Naive thymus-derived CD4-positive, alpha-beta T cell (primary cell): ENCODE measurements at regions of chr1 and their contacts with region 1.

Region 1: DNA sequence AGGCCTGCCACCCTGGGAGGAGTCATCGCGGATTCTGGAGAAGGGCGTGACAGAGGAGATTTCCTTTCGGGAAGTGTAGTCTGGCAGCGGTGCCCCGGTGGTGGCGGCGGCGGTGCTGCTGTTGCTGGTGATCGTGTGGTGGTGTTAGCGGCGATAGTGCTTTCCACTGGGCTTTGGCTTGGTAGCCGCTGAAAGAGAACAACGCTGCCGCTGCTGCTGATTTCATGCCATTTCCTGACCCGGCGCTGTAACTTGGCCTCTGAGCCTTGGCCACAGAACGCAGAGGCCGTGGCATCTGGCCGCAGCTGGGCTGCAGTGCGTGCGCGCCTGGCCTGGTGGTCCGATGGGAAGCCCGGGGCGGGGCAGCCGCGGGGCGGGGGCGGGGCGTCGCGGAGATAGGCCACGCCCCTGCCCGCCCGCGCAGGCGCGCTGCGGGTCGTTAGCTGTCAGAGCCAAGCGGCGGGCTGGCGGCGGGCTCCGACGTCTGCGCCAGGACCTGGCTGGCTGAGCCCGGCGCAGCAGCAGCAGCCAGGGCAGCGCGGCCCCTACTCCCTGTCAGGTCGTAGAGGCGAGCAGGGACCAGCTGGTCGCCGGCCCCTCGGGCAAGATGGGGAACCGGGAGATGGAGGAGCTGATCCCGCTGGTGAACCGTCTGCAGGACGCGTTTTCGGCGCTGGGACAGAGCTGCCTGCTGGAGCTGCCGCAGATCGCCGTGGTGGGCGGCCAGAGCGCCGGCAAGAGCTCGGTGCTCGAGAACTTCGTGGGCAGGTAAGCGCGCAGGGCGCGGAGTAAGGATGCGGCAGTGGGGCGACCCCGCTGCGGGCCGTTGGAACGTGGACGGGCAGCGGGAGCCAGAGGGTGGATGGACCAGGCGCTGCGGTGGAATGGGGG is at the start of gene DNM3:
- DNase-seq: peak; percentile 71 to 90 (median 86)
- ATAC-seq: peak; percentile 97
- H3K4me3 ChIP-seq: peak within 1 kb of the TSS; percentile 80
- H3K4me3 Mint-ChIP-seq: peak within 1 kb of the TSS; percentile 85 to 93 (median 90)
- H3K27ac ChIP-seq: peak within 1 kb of the TSS; percentile 64
- H3K27ac Mint-ChIP-seq: peak within 1 kb of the TSS; percentile 76 to 95 (median 83)
- H3K4me1 ChIP-seq: peaks cover 0 to 6% of the 10 kb centered on the region in 2 donors
- H3K4me1 Mint-ChIP-seq: peaks cover 15 to 19% (median 18%) of the 10 kb centered on the region in 7 donors
- H3K27me3 ChIP-seq: peaks cover 3 to 16% of the 10 kb centered on the region in 2 donors
- H3K27me3 Mint-ChIP-seq: peaks cover 12 to 44% (median 16%) of the 10 kb centered on the region in 5 donors
- total RNA-seq, gene DNM3: 1.9 to 2.5 (median 2.1) TPM

Region 2: GRCh38 chr1:170531758-170532657 is 1309.3 kb before region 1 on chr1 and contains the start of gene GORAB:
- CTCF ChIA-PET with region 1: no interaction called
- POLR2A ChIA-PET with region 1: no interaction called
- intact Hi-C with region 1: loop called in 1 of 2 experiments (anchors 5 kb)
- DNase-seq: peak; percentile 74 to 87 (median 83)
- ATAC-seq: peak; percentile 97
- H3K4me3 ChIP-seq: peak within 1 kb of the TSS; percentile 95
- H3K4me3 Mint-ChIP-seq: no peak within 1 kb of the TSS
- H3K27ac ChIP-seq: peak within 1 kb of the TSS; percentile 91
- H3K27ac Mint-ChIP-seq: peak within 1 kb of the TSS in 1 of 9 donors; percentile 36
- H3K4me1 ChIP-seq: peaks cover 8 to 14% of the 10 kb centered on the region in 2 donors
- H3K4me1 Mint-ChIP-seq: peaks cover 7 to 29% (median 19%) of the 10 kb centered on the region in 7 donors
- H3K27me3 ChIP-seq: no peaks in the 10 kb centered on the region
- H3K27me3 Mint-ChIP-seq: peaks cover 0 to 20% (median 0%) of the 10 kb centered on the region in 5 donors
- total RNA-seq, gene GORAB: 10.9 to 25.3 (median 22.7) TPM

Region 3: GRCh38 chr1:171292799-171293198 is 548.5 kb before region 1 on chr1:
- CTCF ChIA-PET with region 1: no interaction called
- POLR2A ChIA-PET with region 1: no interaction called
- intact Hi-C with region 1: no loop called
- DNase-seq: no peak
- ATAC-seq: no peak
- H3K4me3 ChIP-seq: no peak overlapping the region
- H3K4me3 Mint-ChIP-seq: no peak overlapping the region
- H3K27ac ChIP-seq: no peak overlapping the region
- H3K27ac Mint-ChIP-seq: no peak overlapping the region
- H3K4me1 ChIP-seq: no peaks in the 10 kb centered on the region
- H3K4me1 Mint-ChIP-seq: no peaks in the 10 kb centered on the region
- H3K27me3 ChIP-seq: no peaks in the 10 kb centered on the region
- H3K27me3 Mint-ChIP-seq: peaks cover 0 to 43% (median 19%) of the 10 kb centered on the region in 5 donors

Region 4: DNA sequence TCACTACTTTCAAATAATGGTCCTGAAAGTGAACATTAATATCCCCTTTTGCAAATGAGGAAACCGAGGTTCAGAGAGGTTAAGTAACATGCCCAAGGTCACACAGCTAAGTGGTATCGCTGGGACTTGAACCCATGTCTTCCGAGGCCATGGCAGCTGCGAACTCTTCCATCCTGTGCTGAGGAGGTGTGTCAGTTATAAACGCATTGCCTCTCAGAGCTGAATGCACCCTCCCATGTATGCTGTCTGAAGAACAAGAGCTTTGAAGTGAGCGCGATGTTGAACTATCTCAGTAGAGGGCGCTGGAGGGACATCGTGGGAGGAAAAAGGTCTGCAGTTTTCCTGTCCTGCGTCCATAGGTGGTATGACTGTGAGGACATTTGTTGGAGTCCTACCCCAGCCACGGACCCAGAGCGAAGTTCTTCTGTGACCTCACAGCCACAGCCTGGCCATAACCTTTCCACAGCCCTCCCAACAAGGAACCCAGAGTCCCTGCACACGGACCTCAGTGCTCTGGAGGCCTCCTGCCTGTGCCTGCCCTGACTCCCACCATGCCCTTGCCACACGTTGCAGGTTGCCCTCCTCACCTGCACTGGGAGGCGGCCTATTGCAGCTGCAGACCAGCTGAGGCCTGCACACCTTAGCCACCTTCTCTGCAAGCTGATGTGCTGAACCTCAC is 196.4 kb before region 1 on chr1:
- CTCF ChIA-PET with region 1: no interaction called
- POLR2A ChIA-PET with region 1: no interaction called
- intact Hi-C with region 1: loop called in 1 of 2 experiments (anchors 5 kb)
- DNase-seq: peak; percentile 19 to 73 (median 62)
- ATAC-seq: peak; percentile 90
- H3K4me3 ChIP-seq: no peak overlapping the region
- H3K4me3 Mint-ChIP-seq: peak overlapping the region in 4 of 10 donors; percentile 2 to 27 (median 14)
- H3K27ac ChIP-seq: no peak overlapping the region
- H3K27ac Mint-ChIP-seq: peak overlapping the region in 3 of 9 donors; percentile 42 to 82 (median 77)
- H3K4me1 ChIP-seq: peaks cover 0 to 4% of the 10 kb centered on the region in 2 donors
- H3K4me1 Mint-ChIP-seq: peaks cover 4 to 12% (median 6%) of the 10 kb centered on the region in 7 donors
- H3K27me3 ChIP-seq: no peaks in the 10 kb centered on the region
- H3K27me3 Mint-ChIP-seq: peaks cover 0 to 9% (median 0%) of the 10 kb centered on the region in 5 donors

Region 5: GRCh38 chr1:171801487-171801891 is 39.8 kb before region 1 on chr1:
- CTCF ChIA-PET with region 1: interaction called, 3 read pairs
- POLR2A ChIA-PET with region 1: no interaction called
- intact Hi-C with region 1: loop called in 1 of 2 experiments (anchors 2 kb)
- DNase-seq: peak in 3 of 9 donors; percentile 12 to 17 (median 13)
- ATAC-seq: no peak
- H3K4me3 ChIP-seq: no peak overlapping the region
- H3K4me3 Mint-ChIP-seq: no peak overlapping the region
- H3K27ac ChIP-seq: no peak overlapping the region
- H3K27ac Mint-ChIP-seq: peak overlapping the region in 5 of 9 donors; percentile 25 to 80 (median 40)
- H3K4me1 ChIP-seq: peaks cover 0 to 3% of the 10 kb centered on the region in 2 donors
- H3K4me1 Mint-ChIP-seq: peaks cover 0 to 13% (median 8%) of the 10 kb centered on the region in 7 donors
- H3K27me3 ChIP-seq: no peaks in the 10 kb centered on the region
- H3K27me3 Mint-ChIP-seq: no peaks in the 10 kb centered on the region

Region 6: GRCh38 chr1:171828794-171829193 is 12.5 kb before region 1 on chr1:
- CTCF ChIA-PET with region 1: no interaction called
- POLR2A ChIA-PET with region 1: no interaction called
- intact Hi-C with region 1: no loop called
- DNase-seq: no peak
- ATAC-seq: no peak
- H3K4me3 ChIP-seq: no peak overlapping the region
- H3K4me3 Mint-ChIP-seq: no peak overlapping the region
- H3K27ac ChIP-seq: no peak overlapping the region
- H3K27ac Mint-ChIP-seq: no peak overlapping the region
- H3K4me1 ChIP-seq: no peaks in the 10 kb centered on the region
- H3K4me1 Mint-ChIP-seq: no peaks in the 10 kb centered on the region
- H3K27me3 ChIP-seq: no peaks in the 10 kb centered on the region
- H3K27me3 Mint-ChIP-seq: no peaks in the 10 kb centered on the region

Region 7: GRCh38 chr1:172443626-172444453 is 602.5 kb after region 1 on chr1 and contains the start of gene PIGC:
- CTCF ChIA-PET with region 1: no interaction called
- POLR2A ChIA-PET with region 1: no interaction called
- intact Hi-C with region 1: loop called in 1 of 2 experiments (anchors 5 kb)
- DNase-seq: peak; percentile 78 to 89 (median 87)
- ATAC-seq: peak; percentile 100
- H3K4me3 ChIP-seq: peak within 1 kb of the TSS; percentile 72
- H3K4me3 Mint-ChIP-seq: peak within 1 kb of the TSS; percentile 87 to 98 (median 94)
- H3K27ac ChIP-seq: peak within 1 kb of the TSS; percentile 83
- H3K27ac Mint-ChIP-seq: peak within 1 kb of the TSS; percentile 91 to 97 (median 93)
- H3K4me1 ChIP-seq: peaks cover 15 to 25% of the 10 kb centered on the region in 2 donors
- H3K4me1 Mint-ChIP-seq: peaks cover 27 to 53% (median 47%) of the 10 kb centered on the region in 7 donors
- H3K27me3 ChIP-seq: no peaks in the 10 kb centered on the region
- H3K27me3 Mint-ChIP-seq: no peaks in the 10 kb centered on the region
- total RNA-seq, gene PIGC: 21.1 to 57.4 (median 25.1) TPM